ENCODE measurements at regions of chr12 and their contacts with region 1.

Region 1: DNA sequence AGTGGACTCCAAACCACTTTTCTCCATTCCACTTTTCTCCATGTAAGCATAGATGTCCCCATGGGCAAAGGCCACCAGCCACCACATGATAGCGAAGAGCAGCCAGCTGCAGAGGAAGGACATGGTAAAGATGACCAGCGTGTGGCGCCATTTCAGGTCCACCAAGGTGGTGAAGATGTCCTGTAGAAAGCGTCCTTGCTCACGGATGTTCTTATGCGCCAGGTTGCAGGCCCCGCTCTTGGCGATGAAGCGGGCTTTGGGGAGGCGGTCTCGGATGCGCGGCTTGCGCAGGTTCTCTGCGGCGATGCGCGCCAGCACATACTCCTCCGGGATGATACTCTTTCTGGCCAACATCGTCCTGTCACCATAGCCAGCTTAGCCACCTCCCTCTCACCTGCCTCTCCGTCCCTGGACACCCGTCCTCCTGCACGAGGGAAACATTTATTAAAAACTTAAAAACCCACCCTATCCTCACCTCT is 1.2 kb downstream of the KCNJ8 start:
- DNase-seq: no peak
- H3K4me3 Mint-ChIP-seq: no peak overlapping the region
- H3K27ac Mint-ChIP-seq: no peak overlapping the region
- H3K4me1 Mint-ChIP-seq: no peaks in the 10 kb centered on the region
- H3K27me3 Mint-ChIP-seq: peaks cover 40% of the 10 kb centered on the region

Region 2: DNA sequence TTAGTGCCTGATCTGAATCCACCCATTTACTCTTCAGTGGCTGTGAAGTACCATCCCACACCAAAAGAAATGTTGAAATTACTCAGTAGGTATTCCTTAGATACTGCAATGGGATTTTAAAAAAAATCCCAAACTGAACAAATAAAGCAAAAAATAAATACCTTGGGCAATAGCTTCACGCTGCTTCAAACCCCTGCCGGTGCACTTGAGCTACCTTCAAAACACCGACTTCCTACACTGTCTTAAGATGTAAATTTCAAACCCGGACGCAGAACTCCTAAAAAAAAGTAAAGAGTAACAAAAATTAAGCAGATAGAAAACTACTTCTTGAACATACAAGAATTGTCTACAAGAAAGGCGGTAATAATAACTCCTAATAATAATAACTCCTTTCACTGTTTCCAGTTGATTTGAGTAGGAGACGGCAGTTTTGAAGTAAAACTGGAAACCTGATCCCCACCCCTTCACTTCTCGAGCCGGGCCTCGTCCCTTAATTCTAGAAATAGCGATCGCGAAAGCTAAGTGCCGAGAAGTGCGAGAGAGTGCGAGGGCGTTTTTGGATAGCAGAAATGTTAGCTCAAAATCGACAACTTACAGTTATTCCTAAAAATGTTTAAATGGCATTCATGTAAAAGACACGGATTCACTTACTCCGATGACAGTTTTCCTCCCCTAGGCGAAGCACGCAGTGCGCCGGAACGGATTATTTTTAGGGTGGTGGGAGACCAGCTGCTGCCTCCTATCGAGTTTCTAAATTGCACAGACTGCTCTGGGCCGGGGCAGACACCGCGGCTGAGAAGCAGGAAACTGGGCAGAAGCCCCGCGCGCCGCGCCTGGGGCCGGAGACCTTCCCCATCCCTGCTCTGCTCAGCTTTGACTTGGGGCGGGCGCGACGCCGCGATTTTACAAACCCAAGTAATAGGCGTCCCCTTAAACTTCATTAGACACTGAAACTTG is 167.5 kb after region 1 on chr12 and contains the start of gene ABCC9:
- intact Hi-C with region 1: loop called (anchors 5 kb)
- DNase-seq: no peak
- H3K4me3 Mint-ChIP-seq: peak within 1 kb of the TSS; percentile 29
- H3K27ac Mint-ChIP-seq: no peak within 1 kb of the TSS
- H3K4me1 Mint-ChIP-seq: peaks cover 17% of the 10 kb centered on the region
- H3K27me3 Mint-ChIP-seq: peaks cover 49% of the 10 kb centered on the region
- total RNA-seq, gene ABCC9: not detected in 2 replicates